Sciatic nerve (tissue), 2 donors: ENCODE measurements at regions of chr11 and their contacts with region 1.

Region 1: DNA sequence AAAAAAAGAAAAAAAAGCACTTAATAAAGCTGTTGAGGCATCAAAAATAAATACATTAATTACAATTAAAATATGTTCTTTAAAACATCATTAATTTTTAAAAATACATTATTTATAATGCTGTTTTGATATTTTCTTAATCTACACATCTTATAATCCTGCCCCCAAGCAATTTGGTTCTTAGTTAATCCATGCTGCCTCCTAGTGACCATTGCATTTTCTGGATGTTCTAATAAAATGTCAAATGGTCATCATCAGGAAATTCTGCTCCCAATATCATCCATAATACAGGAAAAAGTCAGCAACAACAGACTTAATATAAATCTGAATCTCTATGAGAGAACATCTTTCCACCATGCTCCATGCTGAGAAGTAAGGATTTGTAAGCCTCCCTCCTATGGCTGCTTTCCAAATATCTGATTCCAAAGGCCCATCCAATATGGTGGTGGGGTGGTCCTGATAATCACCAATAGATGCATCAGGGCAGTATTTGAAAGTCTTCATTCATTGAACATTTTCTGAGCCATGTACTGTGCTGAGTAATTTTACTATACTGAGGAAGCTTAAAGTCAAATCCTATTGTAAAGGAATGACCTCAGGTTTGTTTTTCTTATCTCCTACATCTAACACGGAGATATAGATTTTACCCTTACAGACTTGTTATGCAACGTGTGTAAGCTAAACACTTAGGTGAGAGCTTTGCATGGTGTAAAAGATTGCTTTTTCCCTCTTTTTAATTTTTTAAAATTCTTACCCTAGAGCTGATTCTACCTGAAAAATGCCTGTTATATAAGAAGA is 124.7 kb upstream of the BMAL1 start:
- DNase-seq: no peak
- ATAC-seq: no peak

Region 2: GRCh38 chr11:12963792-12964536 is 189.0 kb before region 1 on chr11:
- intact Hi-C with region 1: loop called (anchors 10 kb)
- DNase-seq: peak; percentile 82
- ATAC-seq: peak; percentile 87